Ovary (tissue), 10 donors: ENCODE measurements at regions of chr19 and their contacts with region 1.

Region 1: GRCh38 chr19:48965040-48965805 is at the start of gene FTL:
- DNase-seq: peak; percentile 97 to 99 (median 98)
- H3K4me3 ChIP-seq: peak within 1 kb of the TSS; percentile 98
- H3K27ac ChIP-seq: peak within 1 kb of the TSS; percentile 87 to 88
- H3K4me1 ChIP-seq: peaks cover 10% of the 10 kb centered on the region
- H3K27me3 ChIP-seq: no peaks in the 10 kb centered on the region
- CTCF ChIP-seq: no peak
- EP300 ChIP-seq: peak; percentile 72
- POLR2A ChIP-seq: peak; percentile 100
- total RNA-seq, gene FTL: 1,608 to 2,908 (median 2,022) TPM

Region 2: DNA sequence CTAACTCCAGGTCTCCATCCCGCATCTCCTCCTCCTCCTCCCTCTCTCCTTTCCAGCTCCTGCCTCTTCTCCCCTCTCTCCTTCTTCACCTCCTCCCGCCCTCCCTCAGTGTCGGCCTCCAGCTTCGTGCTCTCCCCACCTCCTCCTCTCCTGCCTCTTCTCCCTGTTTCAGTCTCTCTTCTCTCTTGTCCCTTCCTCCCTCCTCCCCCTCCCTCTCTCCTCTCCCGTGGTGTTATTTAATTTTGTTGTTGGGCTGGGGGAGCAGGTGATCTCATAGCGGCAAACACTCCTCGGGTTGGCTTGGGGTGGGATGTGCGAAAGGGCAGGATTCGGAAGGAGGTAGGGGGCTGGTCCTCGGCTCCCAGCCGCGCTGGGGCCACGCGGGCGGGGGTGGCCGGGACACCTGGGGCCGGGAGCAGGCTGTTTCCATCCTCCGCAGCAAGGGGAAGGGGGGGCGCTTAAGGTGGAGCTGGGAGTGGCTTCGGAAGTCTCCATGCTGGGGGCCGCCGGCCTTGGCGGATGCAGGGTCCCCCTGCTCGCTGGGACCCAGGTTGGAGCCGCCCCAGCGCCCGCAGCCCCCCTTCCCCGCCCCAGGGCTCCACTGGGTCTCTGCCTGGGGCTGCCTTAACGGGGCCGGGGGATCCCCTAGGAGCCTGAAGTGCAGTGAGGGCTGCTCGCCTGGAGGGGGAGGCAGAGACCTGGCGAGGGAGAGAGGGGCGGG is 319.1 kb before region 1 on chr19 and contains the start of gene CA11:
- intact Hi-C with region 1: loop called in 1 of 4 experiments (anchors 5 kb)
- DNase-seq: peak; percentile 93 to 95 (median 94)
- H3K4me3 ChIP-seq: peak within 1 kb of the TSS; percentile 56
- H3K27ac ChIP-seq: peak within 1 kb of the TSS; percentile 92 to 97
- H3K4me1 ChIP-seq: peaks cover 4% of the 10 kb centered on the region
- H3K27me3 ChIP-seq: no peaks in the 10 kb centered on the region
- CTCF ChIP-seq: peak; percentile 94 to 95 (median 94)
- EP300 ChIP-seq: no peak
- POLR2A ChIP-seq: peak; percentile 71
- total RNA-seq, gene CA11: 14.9 to 52.5 (median 40.8) TPM

Region 3: GRCh38 chr19:48795055-48795684 is 170.1 kb before region 1 on chr19:
- intact Hi-C with region 1: loop called in 2 of 4 experiments (anchors 5 to 10 kb)
- DNase-seq: peak; percentile 91 to 93 (median 92)
- H3K4me3 ChIP-seq: peak overlapping the region; percentile 33
- H3K27ac ChIP-seq: peak overlapping the region; percentile 82 to 85
- H3K4me1 ChIP-seq: peaks cover 12% of the 10 kb centered on the region
- H3K27me3 ChIP-seq: no peaks in the 10 kb centered on the region
- CTCF ChIP-seq: peak; percentile 97 to 99 (median 99)
- EP300 ChIP-seq: no peak
- POLR2A ChIP-seq: peak; percentile 58

Region 4: DNA sequence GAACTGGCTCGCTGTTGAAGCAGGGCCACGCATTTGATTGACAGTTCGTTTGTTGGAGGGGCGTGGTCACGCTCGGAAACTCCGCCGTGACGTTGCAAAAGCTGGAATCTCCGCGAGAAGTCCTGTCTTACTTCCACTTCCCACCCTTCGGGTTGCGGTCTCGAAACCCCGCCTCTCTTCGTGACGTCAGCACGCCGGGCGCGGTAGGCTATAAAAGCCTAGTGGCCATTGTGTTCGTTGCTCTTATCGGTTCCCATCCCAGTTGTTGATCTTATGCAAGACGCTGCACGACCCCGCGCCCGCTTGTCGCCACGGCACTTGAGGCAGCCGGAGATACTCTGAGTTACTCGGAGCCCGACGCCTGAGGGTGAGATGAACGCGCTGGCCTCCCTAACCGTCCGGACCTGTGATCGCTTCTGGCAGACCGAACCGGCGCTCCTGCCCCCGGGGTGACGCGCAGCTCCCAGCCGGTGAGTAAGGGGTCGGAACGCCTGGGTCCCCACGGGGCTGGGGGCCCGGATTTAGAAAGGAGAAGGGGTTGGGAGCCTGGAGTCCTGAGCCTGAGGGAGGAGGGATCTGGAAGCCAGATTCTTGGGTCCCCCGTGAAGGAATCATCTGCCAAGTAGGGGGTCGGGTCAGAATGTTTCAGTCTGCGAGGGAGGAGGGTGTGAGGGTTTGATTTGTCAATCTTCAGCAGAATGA is 92.9 kb before region 1 on chr19 and contains the start of gene PPP1R15A:
- intact Hi-C with region 1: loop called in 1 of 4 experiments (anchors 10 kb)
- DNase-seq: peak; percentile 98 to 100 (median 99)
- H3K4me3 ChIP-seq: peak within 1 kb of the TSS; percentile 97
- H3K27ac ChIP-seq: peak within 1 kb of the TSS; percentile 99
- H3K4me1 ChIP-seq: peaks cover 17% of the 10 kb centered on the region
- H3K27me3 ChIP-seq: no peaks in the 10 kb centered on the region
- CTCF ChIP-seq: peak in 2 of 3 donors; percentile 67 to 90
- EP300 ChIP-seq: peak; percentile 75
- POLR2A ChIP-seq: peak; percentile 100
- total RNA-seq, gene PPP1R15A: 22.8 to 156 (median 40.1) TPM

Region 5: DNA sequence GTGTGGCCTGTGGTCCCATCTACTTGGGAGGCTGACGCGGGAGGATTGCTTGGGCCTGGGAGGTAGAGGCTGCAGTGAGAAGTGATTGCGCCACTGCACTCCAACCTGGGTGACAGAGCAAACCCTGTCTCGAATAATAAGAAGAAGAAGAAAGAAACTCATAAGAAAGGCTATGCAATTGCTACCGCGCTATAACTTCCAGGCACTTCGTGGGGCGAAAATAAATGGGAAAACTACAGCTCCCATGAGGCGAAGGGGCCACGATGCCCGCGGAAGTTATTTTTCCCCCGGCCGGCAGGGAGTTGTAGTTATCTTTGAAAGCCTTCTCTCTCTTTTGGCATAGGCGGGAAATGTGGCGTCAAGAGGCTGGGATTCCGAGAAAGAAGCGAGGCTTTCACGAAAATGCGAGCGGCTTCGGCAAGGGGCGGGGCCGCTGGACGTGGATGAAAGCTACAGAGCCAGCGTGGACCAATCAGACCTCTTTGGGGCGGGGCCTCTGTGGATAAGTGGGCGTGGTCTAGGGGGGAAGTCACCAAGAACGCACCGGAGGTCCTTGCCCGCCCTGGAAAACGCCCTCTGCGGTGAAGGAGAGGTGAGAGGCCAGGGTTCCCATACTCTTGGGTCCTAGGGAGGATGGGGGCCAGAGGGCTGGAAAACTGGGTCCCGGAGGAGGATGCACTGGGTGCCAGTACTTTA is 65.3 kb before region 1 on chr19 and contains the start of gene NUCB1:
- intact Hi-C with region 1: loop called in 2 of 4 experiments (anchors 2 to 10 kb)
- DNase-seq: peak; percentile 99 to 100 (median 99)
- H3K4me3 ChIP-seq: peak within 1 kb of the TSS; percentile 89
- H3K27ac ChIP-seq: peak within 1 kb of the TSS; percentile 87 to 96
- H3K4me1 ChIP-seq: peaks cover 1% of the 10 kb centered on the region
- H3K27me3 ChIP-seq: no peaks in the 10 kb centered on the region
- CTCF ChIP-seq: peak in 2 of 3 donors; percentile 48 to 51
- EP300 ChIP-seq: peak; percentile 98
- POLR2A ChIP-seq: peak; percentile 86
- total RNA-seq, gene NUCB1: 128 to 249 (median 189) TPM